Activated T-helper 1 cell treated with anti-CD3 and anti-CD28 coated beads, Interleukin-12 subunit alpha, Interleukin-12 subunit beta, Interleukin-2, Interleukin-4 antibody, amounts not matched to agents 30 ng/mL and 10 ng/mL and 1 ng/mL, durations not matched to agents 14 hours and 24 hours and 36 hours (primary cell): ENCODE measurements at regions of chr9 and their contacts with region 1.

Region 1: GRCh38 chr9:99104459-99105151 is at the start of gene TGFBR1:
- DNase-seq: peak; percentile 97
- H3K4me3 Mint-ChIP-seq: peak within 1 kb of the TSS; percentile 85
- H3K27ac Mint-ChIP-seq: peak within 1 kb of the TSS; percentile 83
- H3K4me1 Mint-ChIP-seq: peaks cover 65% of the 10 kb centered on the region
- H3K27me3 Mint-ChIP-seq: no peaks in the 10 kb centered on the region
- total RNA-seq, gene TGFBR1: 38.5 and 42.6 TPM in 2 replicates

Region 2: GRCh38 chr9:98974994-98975712 is 129.5 kb before region 1 on chr9:
- intact Hi-C with region 1: loop called (anchors 1 kb)
- DNase-seq: peak; percentile 70
- H3K4me3 Mint-ChIP-seq: peak overlapping the region; percentile 8
- H3K27ac Mint-ChIP-seq: no peak overlapping the region
- H3K4me1 Mint-ChIP-seq: peaks cover 6% of the 10 kb centered on the region
- H3K27me3 Mint-ChIP-seq: peaks cover 31% of the 10 kb centered on the region

Region 3: GRCh38 chr9:99092643-99093491 is 11.7 kb before region 1 on chr9:
- intact Hi-C with region 1: loop called (anchors 1 kb)
- DNase-seq: peak; percentile 57
- H3K4me3 Mint-ChIP-seq: peak overlapping the region; percentile 60
- H3K27ac Mint-ChIP-seq: peak overlapping the region; percentile 98
- H3K4me1 Mint-ChIP-seq: peaks cover 65% of the 10 kb centered on the region
- H3K27me3 Mint-ChIP-seq: no peaks in the 10 kb centered on the region

Region 4: DNA sequence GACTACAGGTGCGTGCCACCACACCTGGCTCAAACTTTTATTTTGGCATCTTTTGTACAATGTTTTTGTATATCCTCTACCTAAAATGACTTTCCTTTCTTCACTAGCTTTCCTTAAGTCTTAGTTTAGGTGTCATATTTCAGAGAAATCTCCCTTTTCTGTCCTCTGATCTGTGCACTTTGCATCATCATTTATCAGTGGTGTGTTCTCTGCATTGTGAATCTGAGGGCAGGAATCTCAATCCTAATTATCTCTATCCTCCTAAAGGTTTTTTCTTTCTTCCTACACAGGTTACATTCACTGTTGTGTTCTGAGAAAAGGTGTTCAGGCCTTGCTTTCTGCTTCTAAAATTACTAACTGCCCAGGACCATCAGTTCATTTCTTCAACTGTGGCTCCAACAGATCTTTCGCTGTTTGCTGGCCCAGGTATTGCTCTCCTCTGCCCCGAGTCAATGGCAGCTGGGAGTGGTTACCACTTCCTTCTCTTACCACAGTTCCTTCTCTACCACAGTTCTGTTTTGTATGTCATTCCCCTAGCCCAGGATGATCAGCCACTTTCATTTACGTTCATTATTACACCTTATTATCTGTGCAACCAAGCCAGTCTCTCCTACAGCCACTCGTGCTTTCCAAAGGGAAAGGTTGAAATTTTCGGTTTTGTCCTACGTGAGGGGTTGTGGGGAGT is 14.3 kb after region 1 on chr9:
- intact Hi-C with region 1: loop called (anchors 1 kb)
- DNase-seq: peak; percentile 50
- H3K4me3 Mint-ChIP-seq: peak overlapping the region; percentile 77
- H3K27ac Mint-ChIP-seq: peak overlapping the region; percentile 83
- H3K4me1 Mint-ChIP-seq: peaks cover 78% of the 10 kb centered on the region
- H3K27me3 Mint-ChIP-seq: no peaks in the 10 kb centered on the region

Region 5: GRCh38 chr9:99134893-99135341 is 30.3 kb after region 1 on chr9:
- intact Hi-C with region 1: loop called (anchors 2 kb)
- DNase-seq: no peak
- H3K4me3 Mint-ChIP-seq: peak overlapping the region; percentile 66
- H3K27ac Mint-ChIP-seq: peak overlapping the region; percentile 37
- H3K4me1 Mint-ChIP-seq: peaks cover 66% of the 10 kb centered on the region
- H3K27me3 Mint-ChIP-seq: no peaks in the 10 kb centered on the region

Region 6: GRCh38 chr9:99221621-99222415 is 117.2 kb after region 1 on chr9 and contains the starts of genes ALG2 and SEC61B:
- intact Hi-C with region 1: loop called (anchors 2 kb)
- DNase-seq: peak; percentile 89
- H3K4me3 Mint-ChIP-seq: peak within 1 kb of the TSS; percentile 99
- H3K27ac Mint-ChIP-seq: peak within 1 kb of the TSS; percentile 98
- H3K4me1 Mint-ChIP-seq: peaks cover 67% of the 10 kb centered on the region
- H3K27me3 Mint-ChIP-seq: no peaks in the 10 kb centered on the region
- total RNA-seq, gene ALG2: 37.6 and 39.7 TPM in 2 replicates
- total RNA-seq, gene SEC61B: 180 and 184 TPM in 2 replicates

Region 7: DNA sequence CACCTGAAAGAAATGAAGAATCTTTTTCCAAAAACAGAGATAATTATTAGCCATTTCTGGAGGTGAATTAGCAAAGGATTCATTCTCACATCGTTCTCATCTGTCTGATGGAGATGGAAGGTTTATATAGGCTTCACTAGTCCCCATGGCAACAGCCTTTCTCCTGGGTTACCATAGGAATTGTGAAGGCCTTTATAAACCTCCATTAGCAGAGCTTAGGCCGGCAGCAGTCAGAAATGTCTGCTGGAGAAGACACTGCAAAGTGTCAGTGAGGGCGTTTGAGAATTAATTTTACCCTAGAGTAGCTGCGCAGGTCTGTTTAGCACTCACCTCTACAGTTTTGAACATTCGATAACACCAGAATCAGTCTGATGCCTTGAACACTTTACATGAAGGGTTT is 426.7 kb after region 1 on chr9:
- intact Hi-C with region 1: no loop called
- DNase-seq: no peak
- H3K4me3 Mint-ChIP-seq: no peak overlapping the region
- H3K27ac Mint-ChIP-seq: no peak overlapping the region
- H3K4me1 Mint-ChIP-seq: no peaks in the 10 kb centered on the region
- H3K27me3 Mint-ChIP-seq: peaks cover 21% of the 10 kb centered on the region